ENCODE measurements at regions of chr17 and their contacts with region 1.

Region 1: DNA sequence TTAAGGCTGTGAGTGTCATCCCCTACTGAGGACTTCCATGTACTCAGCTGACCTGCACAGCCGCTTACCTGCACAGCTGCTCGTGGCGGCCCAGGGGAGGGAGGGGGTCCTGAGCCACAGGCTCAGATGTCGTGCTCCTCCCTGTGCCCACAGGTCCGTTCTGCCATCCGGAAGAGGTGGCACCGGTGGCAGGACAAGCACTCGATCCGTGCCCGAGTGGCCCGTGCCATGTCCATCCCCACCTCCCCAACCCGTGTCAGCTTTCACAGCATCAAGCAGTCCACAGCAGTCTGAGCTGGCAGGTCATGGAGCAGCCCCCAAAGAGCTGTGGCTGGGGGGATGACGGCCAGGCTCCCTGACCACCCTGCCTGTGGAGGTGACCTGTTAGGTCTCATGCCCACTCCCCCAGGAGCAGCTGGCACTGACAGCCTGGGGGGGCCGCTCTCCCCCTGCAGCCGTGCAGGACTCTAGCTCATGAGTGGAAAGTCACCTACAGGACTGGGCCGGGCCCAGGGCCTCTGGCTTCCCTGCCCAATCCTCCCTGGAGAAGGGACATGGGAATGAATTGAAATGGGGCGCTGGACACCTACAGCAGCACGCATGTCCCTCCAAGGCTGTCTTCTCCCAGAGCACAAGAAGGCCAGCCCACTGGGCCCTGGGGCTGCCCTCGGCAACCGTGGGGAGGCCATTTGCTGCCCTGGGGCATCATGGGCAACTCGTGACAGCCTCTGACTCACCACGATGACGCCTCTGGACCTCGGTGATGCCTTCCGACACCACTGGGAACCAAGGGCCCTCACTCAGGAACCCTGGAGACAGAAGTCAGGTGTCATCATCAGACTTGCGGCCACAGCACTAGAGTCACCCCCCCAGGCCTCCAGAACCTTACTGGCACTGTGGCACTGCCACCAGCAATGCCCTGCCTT is 9.9 kb upstream of the SPPL2C start:
- DNase-seq: no peak
- ATAC-seq: no peak
- H3K4me3 ChIP-seq: no peak overlapping the region
- H3K27ac ChIP-seq: no peak overlapping the region
- H3K4me1 ChIP-seq: no peaks in the 10 kb centered on the region
- H3K27me3 ChIP-seq: no peaks in the 10 kb centered on the region; a peak in 2 of 4 replicates
- CTCF ChIP-seq: no peak
- EP300 ChIP-seq: no peak
- POLR2A ChIP-seq: no peak
- RAD21 ChIP-seq: no peak

Region 2: DNA sequence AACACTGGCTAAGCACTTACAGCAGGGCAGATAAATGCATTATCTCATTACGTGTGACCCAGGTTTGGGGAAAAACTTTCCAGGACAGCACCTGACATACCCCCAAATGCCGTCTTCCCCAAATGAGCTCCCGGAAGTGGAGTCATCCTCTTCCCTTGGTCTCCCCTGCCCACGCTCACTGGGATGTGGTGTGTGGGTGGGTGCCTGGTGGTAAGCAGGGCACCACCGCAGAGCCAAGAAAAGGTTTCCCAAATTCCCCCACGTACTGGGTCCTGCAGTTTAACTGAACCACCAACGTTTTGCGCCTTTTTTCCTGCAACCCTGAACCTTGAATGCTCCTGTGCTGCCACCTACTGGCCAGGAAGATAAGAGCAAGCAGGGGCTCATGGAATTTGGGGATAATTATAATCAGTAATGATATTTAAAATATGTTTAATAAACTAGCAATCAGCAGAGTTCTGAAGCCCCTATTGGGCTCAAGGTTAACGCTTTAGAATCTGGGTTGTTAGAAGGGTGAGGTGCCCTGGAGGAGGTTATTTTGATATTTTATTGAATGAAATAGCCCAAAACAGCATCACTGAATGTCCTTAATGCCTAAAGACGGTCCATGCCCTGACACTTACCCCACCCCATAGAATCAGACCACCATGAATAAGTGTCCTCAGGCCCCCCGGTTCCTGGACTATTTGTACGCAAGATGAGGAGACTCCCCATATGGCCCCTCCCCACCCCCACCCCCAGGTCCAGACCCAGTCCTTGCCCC is 18.0 kb after region 1 on chr17:
- CTCF ChIA-PET with region 1: interaction called, 10 read pairs
- POLR2A ChIA-PET with region 1: no interaction called
- RAD21 ChIA-PET with region 1: no interaction called
- SMC1A ChIA-PET with region 1: interaction called, 3 read pairs
- in situ Hi-C with region 1: no loop called
- intact Hi-C with region 1: no loop called
- DNase-seq: no peak
- ATAC-seq: peak; percentile 55; the same call in 2 of the 3 replicates
- H3K4me3 ChIP-seq: no peak overlapping the region
- H3K27ac ChIP-seq: no peak overlapping the region
- H3K4me1 ChIP-seq: no peaks in the 10 kb centered on the region
- H3K27me3 ChIP-seq: no peaks in the 10 kb centered on the region; a peak in 1 of 4 replicates
- CTCF ChIP-seq: peak; percentile 80 to 89 (median 85)
- EP300 ChIP-seq: no peak
- POLR2A ChIP-seq: no peak
- RAD21 ChIP-seq: peak; percentile 80

Measured in GM12878 (cell line).